Transverse colon (tissue), 4 donors: ENCODE measurements at regions of chr18 and their contacts with region 1.

Region 1: GRCh38 chr18:9124824-9125223 is 11.8 kb upstream of the ANKRD12 start:
- DNase-seq: no peak
- H3K4me3 ChIP-seq: no peak overlapping the region
- H3K27ac ChIP-seq: no peak overlapping the region
- H3K4me1 ChIP-seq: peaks cover 0 to 17% (median 7%) of the 10 kb centered on the region in 4 donors
- H3K27me3 ChIP-seq: no peaks in the 10 kb centered on the region
- CTCF ChIP-seq: no peak
- EP300 ChIP-seq: no peak
- POLR2A ChIP-seq: no peak

Region 2: GRCh38 chr18:9106800-9107584 is 17.8 kb before region 1 on chr18:
- in situ Hi-C with region 1: no loop called
- intact Hi-C with region 1: loop called (anchors 1 kb)
- DNase-seq: no peak
- H3K4me3 ChIP-seq: no peak overlapping the region
- H3K27ac ChIP-seq: peak overlapping the region; percentile 18 to 99 (median 76)
- H3K4me1 ChIP-seq: peaks cover 55 to 82% (median 74%) of the 10 kb centered on the region in 4 donors
- H3K27me3 ChIP-seq: no peaks in the 10 kb centered on the region
- CTCF ChIP-seq: no peak
- EP300 ChIP-seq: no peak
- POLR2A ChIP-seq: no peak

Region 3: DNA sequence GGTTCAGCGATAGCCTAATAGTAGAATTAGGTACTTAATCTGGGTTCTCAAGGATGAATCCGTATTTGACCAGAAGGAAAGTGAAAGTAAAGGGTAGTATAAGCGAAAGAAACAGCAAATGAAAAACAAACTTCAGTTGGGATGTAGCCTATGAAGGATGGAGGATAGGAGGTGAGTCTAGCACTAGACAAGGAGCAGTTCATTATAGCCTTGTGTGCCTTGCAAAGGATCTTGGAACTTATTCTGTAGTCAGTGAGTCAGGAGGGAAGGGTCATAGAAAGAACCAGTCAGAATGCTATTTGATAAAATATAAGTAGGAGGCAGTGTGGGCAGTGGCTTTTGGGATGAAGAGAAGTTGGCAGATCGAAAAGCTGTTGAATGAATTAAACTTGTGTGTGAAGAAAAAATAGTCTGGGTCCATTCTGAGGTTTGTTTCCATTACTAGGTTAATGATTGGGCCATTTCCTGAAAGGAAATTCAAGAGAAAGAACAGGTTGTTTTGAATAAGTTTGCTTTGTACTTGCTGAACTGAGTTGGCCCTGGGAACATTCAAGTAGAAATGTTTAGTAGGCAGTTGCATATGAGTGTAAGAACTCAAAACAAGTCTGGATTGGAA is 60.3 kb after region 1 on chr18:
- in situ Hi-C with region 1: no loop called
- intact Hi-C with region 1: no loop called
- DNase-seq: no peak
- H3K4me3 ChIP-seq: no peak overlapping the region
- H3K27ac ChIP-seq: no peak overlapping the region
- H3K4me1 ChIP-seq: peaks cover 0 to 32% (median 5%) of the 10 kb centered on the region in 4 donors
- H3K27me3 ChIP-seq: no peaks in the 10 kb centered on the region
- CTCF ChIP-seq: no peak
- EP300 ChIP-seq: no peak
- POLR2A ChIP-seq: no peak

Region 4: GRCh38 chr18:9827641-9828505 is 703.0 kb after region 1 on chr18:
- in situ Hi-C with region 1: no loop called
- intact Hi-C with region 1: no loop called
- DNase-seq: peak; percentile 61
- H3K4me3 ChIP-seq: no peak overlapping the region
- H3K27ac ChIP-seq: peak overlapping the region; percentile 58 to 84 (median 82)
- H3K4me1 ChIP-seq: peaks cover 20 to 46% (median 34%) of the 10 kb centered on the region in 4 donors
- H3K27me3 ChIP-seq: no peaks in the 10 kb centered on the region
- CTCF ChIP-seq: no peak
- EP300 ChIP-seq: no peak
- POLR2A ChIP-seq: no peak